ENCODE measurements at regions of chr13 and their contacts with region 1.

Region 1: GRCh38 chr13:98653463-98653985 is 76.6 kb upstream of the STK24 start:
- DNase-seq: peak; percentile 89
- H3K4me3 Mint-ChIP-seq: peak overlapping the region; percentile 32
- H3K27ac Mint-ChIP-seq: peak overlapping the region; percentile 54
- H3K4me1 Mint-ChIP-seq: peaks cover 2% of the 10 kb centered on the region
- H3K27me3 Mint-ChIP-seq: no peaks in the 10 kb centered on the region

Region 2: GRCh38 chr13:97191615-97192014 is 1461.9 kb before region 1 on chr13:
- CTCF ChIA-PET with region 1: no interaction called
- intact Hi-C with region 1: no loop called
- DNase-seq: no peak
- H3K4me3 Mint-ChIP-seq: no peak overlapping the region
- H3K27ac Mint-ChIP-seq: no peak overlapping the region
- H3K4me1 Mint-ChIP-seq: peaks cover 7% of the 10 kb centered on the region
- H3K27me3 Mint-ChIP-seq: no peaks in the 10 kb centered on the region

Region 3: DNA sequence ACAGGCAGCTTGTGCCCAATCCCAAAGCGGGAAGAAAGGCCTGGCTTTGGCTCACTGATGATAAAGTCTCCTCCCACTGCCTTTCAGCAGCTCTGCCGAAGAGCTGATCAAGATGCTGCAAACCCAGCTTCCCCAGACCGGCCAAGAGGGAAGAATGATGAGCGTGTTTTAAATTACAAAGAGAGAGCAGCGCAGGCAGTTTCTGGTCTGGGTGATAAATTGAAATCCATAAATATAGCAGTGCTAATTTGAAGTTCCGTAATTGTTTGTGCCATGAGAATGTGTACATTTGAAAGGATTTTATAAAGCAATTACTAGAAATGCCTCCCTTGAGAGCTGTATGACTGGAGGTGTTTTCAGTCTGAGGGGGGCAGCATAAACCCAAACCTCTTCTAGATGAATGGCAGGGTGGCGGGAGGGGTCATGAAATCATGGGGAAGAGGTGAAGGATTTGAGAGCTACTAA is 248.4 kb before region 1 on chr13:
- CTCF ChIA-PET with region 1: interaction called, 15 read pairs
- intact Hi-C with region 1: no loop called
- DNase-seq: peak; percentile 11
- H3K4me3 Mint-ChIP-seq: no peak overlapping the region
- H3K27ac Mint-ChIP-seq: no peak overlapping the region
- H3K4me1 Mint-ChIP-seq: no peaks in the 10 kb centered on the region
- H3K27me3 Mint-ChIP-seq: no peaks in the 10 kb centered on the region

Region 4: DNA sequence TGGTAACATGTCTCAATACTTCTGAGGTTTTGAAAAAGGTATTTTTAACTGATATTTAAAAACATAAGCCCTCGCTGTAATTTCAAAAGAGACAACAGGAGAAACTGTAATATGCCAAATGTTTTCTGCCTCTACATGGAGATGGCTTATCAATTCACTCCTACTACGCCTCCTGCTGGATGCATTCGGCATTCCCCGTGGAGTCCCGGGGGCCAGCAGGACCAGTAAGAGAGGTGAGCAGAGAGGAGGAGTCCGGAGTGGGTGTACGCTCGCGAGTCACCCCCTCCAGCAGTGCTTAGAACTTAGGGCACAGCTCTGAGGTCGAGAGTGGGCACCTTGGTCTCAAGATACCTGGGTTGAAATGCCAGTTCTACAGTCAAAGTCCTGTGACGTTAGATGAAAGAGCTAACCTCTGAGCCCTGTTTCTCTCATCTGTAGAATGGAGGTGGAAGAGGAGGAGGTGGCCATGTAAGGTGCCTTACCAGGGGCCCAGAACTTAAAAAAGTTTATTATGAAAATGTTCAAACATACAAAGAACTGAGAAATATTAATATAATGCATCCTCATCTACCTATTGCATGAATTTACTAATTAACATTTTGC is 186.8 kb before region 1 on chr13:
- CTCF ChIA-PET with region 1: interaction called, 12 read pairs
- intact Hi-C with region 1: loop called (anchors 2 kb)
- DNase-seq: peak; percentile 60
- H3K4me3 Mint-ChIP-seq: no peak overlapping the region
- H3K27ac Mint-ChIP-seq: no peak overlapping the region
- H3K4me1 Mint-ChIP-seq: peaks cover 19% of the 10 kb centered on the region
- H3K27me3 Mint-ChIP-seq: no peaks in the 10 kb centered on the region

Region 5: DNA sequence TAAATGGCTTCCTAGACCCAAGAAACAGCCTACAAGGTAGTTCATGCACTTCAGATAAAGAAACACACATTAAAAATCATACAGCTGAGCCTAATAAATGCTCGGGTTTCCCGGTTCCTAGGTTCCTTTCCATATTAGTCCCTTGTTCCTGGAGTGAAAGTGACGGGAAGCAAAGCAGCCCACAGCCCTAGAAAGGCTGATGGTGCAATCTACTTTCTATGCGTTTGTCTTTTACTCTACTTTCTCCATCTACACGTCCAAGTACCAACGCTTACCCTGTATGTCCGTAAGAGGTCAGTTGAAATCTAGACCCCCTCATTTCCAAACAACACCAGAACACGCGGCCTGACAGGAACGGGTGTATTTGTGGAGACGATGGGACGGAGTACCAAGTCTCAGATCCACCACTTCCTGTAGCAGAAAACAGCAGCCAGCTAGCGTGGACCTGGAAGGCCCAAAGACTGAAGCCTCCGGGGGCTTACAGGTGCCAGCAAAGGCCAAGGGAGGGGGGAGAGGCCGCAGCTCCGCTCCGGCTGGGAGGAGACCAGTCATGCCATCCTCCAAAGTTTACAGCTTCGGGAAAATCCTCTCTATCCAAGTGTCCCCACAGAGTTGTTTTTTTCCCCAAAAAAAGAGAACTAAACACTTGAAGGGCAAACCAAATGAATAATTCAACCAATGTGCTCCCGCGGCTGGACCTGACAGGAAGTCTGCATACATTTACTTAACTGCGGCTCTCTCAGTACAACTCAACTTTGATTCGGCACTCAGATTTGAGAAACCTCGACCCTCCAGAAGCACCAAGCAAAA is 110.8 kb before region 1 on chr13:
- CTCF ChIA-PET with region 1: interaction called, 8 read pairs
- intact Hi-C with region 1: loop called (anchors 2 kb)
- DNase-seq: peak; percentile 63
- H3K4me3 Mint-ChIP-seq: peak overlapping the region; percentile 67
- H3K27ac Mint-ChIP-seq: peak overlapping the region; percentile 82
- H3K4me1 Mint-ChIP-seq: peaks cover 94% of the 10 kb centered on the region
- H3K27me3 Mint-ChIP-seq: no peaks in the 10 kb centered on the region

Region 6: GRCh38 chr13:98576963-98577822 is 76.3 kb before region 1 on chr13 and contains the start of gene STK24:
- CTCF ChIA-PET with region 1: interaction called, 14 read pairs
- intact Hi-C with region 1: loop called (anchors 5 kb)
- DNase-seq: peak; percentile 46
- H3K4me3 Mint-ChIP-seq: peak within 1 kb of the TSS; percentile 84
- H3K27ac Mint-ChIP-seq: peak within 1 kb of the TSS; percentile 88
- H3K4me1 Mint-ChIP-seq: peaks cover 35% of the 10 kb centered on the region
- H3K27me3 Mint-ChIP-seq: no peaks in the 10 kb centered on the region
- total RNA-seq, gene STK24: 95.5 to 96.7 TPM

Region 7: DNA sequence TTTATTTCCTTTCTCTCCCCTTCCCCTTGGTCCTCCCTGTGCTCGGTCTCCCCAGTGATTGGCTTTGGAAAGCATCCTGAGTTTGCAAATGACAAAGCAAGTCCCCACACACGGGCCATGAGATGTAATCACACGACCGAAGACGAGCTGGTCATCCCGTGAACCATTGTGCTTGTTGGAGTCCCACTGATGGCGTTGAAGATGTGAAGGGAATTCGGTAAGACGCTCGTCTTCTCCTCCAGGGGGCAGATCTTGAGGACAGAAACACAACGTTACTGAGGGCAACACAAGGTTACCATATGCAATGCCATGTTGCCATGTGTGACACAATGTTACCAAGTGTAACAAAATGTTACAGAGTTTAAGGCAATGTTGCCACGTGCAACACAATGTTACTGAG is 141.0 kb after region 1 on chr13:
- CTCF ChIA-PET with region 1: no interaction called
- intact Hi-C with region 1: no loop called
- DNase-seq: no peak
- H3K4me3 Mint-ChIP-seq: no peak overlapping the region
- H3K27ac Mint-ChIP-seq: no peak overlapping the region
- H3K4me1 Mint-ChIP-seq: no peaks in the 10 kb centered on the region
- H3K27me3 Mint-ChIP-seq: no peaks in the 10 kb centered on the region

Region 8: DNA sequence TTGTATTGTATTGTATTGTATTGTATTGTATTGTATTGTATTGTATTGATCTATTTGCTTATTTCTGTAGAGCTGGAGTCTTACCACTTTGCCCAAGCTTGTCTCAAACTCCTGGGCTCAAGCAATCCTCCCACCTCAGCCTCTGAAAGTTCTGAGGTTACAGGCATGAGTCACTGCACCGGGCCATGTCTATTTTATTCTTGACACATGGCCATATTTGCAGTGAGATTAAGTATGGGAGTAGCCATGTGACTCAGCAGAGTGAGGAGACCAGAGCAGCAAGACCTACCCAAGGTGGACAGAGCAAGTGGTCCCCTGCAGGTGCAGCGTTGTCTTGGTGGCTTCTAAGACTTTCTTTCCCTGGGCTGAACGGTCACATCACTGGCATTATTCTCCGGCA is 498.0 kb after region 1 on chr13:
- CTCF ChIA-PET with region 1: no interaction called
- intact Hi-C with region 1: no loop called
- DNase-seq: peak; percentile 27
- H3K4me3 Mint-ChIP-seq: no peak overlapping the region
- H3K27ac Mint-ChIP-seq: no peak overlapping the region
- H3K4me1 Mint-ChIP-seq: peaks cover 4% of the 10 kb centered on the region
- H3K27me3 Mint-ChIP-seq: no peaks in the 10 kb centered on the region